Activated CD8-positive, alpha-beta T cell treated with anti-CD3 and anti-CD28 coated beads for 36 hours (primary cell): ENCODE measurements at regions of chr19 and their contacts with region 1.

Region 1: GRCh38 chr19:29245215-29245614 is 32.3 kb upstream of the UQCRFS1 start:
- DNase-seq: no peak
- ATAC-seq: no peak
- H3K4me3 Mint-ChIP-seq: no peak overlapping the region
- H3K27ac Mint-ChIP-seq: no peak overlapping the region
- H3K4me1 Mint-ChIP-seq: no peaks in the 10 kb centered on the region
- H3K27me3 Mint-ChIP-seq: peaks cover 10% of the 10 kb centered on the region
- CTCF ChIP-seq: no peak

Region 2: GRCh38 chr19:29263305-29264135 is 18.3 kb after region 1 on chr19:
- CTCF ChIA-PET with region 1: interaction called, 45 read pairs
- POLR2A ChIA-PET with region 1: no interaction called
- intact Hi-C with region 1: no loop called
- DNase-seq: peak; percentile 68
- ATAC-seq: peak; percentile 53
- H3K4me3 Mint-ChIP-seq: no peak overlapping the region
- H3K27ac Mint-ChIP-seq: no peak overlapping the region
- H3K4me1 Mint-ChIP-seq: no peaks in the 10 kb centered on the region
- H3K27me3 Mint-ChIP-seq: peaks cover 12% of the 10 kb centered on the region
- CTCF ChIP-seq: peak; percentile 87